ENCODE measurements at regions of chr6 and their contacts with region 1.

Region 1: DNA sequence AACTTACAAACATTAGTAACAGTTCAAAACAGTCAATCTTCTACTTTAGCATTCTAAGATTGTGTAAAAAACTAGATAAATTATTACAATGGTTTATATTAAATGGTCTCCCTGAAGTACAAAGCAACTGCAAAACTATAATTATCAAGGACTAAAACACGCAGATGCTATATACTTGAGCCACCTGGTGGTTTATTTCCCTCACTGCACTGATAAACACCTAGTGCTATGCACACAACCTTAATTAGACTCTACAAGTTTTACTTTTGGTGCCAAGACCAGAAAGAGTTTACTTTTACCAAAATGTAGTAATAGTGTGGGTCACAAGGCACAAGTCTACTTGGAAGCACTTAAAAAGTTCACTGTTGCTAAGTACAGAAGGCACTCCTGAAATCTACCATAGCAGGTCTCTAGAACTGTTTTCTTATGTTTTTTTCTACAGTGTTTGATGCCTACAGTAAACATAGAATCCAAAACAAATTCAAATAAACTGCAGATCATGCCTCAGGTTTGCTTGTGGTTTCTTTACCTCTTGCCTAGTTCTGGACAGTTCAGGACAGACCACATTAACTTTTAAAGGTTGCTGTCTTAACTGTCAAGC is 49.2 kb downstream of the GMDS start:
- DNase-seq: peak; percentile 72
- H3K4me3 Mint-ChIP-seq: no peak overlapping the region
- H3K27ac Mint-ChIP-seq: no peak overlapping the region
- H3K4me1 Mint-ChIP-seq: no peaks in the 10 kb centered on the region
- H3K27me3 Mint-ChIP-seq: no peaks in the 10 kb centered on the region
- CTCF ChIP-seq: peak; percentile 62

Region 2: DNA sequence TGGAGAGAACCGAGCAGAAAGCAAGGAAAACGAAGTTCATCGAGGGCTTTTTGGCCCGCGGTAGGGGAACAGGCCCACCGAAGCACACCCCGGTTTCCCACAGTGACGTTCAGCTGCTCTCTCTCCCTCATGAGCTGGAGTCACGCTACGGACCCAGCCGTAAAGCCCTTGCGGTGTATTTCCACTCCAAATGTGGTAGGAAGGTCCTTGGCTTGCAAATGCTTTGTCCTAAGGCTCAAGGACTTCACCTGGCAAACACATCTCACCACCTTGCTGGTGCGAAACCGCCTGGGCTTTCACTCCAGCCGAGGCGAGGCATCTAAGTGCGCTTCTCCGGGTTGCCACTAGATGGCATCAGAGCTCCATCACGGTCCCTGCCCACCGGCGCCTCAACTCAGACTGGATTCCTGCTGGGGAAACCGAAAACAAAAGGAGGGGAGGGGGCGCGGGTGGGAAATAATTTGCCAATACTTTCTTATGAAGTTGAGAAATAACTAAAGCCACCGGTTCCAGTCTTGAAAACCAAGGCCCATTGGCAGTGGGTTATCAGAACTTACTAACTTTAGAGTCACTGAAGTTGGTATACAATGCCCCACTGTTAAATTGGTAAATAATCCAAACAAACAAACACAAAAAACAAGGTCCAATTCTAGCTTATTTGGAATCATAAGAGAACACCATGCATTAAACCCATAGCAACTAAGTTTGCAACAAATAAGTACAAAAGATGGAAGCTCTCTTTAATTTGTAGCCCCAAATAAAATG is 599.9 kb before region 1 on chr6:
- CTCF ChIA-PET with region 1: interaction called, 10 read pairs
- POLR2A ChIA-PET with region 1: no interaction called
- intact Hi-C with region 1: loop called (anchors 1 kb)
- DNase-seq: peak; percentile 55
- H3K4me3 Mint-ChIP-seq: no peak overlapping the region
- H3K27ac Mint-ChIP-seq: no peak overlapping the region
- H3K4me1 Mint-ChIP-seq: peaks cover 28% of the 10 kb centered on the region
- H3K27me3 Mint-ChIP-seq: peaks cover 21% of the 10 kb centered on the region
- CTCF ChIP-seq: peak; percentile 93

Region 3: DNA sequence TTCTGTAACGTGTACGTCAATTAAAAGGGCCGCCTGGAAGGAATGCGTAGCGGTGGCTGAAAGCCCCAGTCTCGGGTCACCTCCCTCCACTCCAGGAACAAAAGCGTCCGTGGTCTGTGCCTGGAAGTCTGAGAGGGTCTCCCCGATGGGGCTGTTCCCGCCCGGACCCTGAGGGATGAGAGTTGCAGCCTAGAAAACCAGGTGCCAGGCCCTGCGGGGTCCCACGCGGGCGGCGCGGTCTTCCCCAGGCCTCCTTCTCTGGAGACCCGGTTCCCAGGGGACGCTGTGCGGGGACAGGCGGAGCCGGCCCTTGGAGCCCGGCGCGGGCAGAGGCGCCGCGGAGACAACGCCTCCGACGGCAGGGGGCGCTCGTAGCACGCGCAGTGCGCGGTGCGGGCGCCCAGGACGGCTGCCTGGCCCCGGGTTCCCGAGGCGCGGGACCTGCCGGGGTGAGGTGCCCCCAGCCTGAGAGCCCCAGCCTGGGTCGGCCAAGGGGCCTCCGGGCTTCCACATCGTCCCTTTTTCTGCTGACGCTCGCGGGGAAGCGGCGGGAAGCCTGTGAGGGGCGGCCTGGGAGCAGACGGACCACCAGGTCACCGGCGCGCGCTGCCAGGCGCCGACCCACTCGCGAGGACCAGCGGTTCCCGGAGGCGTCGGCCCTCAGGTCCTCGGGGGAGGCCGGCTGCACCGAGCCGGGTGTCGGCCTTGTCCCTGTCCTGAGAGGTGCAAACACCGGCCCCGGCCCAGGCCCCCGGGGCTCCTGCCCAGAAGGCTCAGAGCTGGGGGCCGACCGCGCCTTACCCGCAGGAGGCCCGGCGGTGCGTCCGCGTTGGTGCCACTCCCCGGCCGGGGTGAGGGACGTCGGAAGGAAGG is 591.8 kb before region 1 on chr6:
- CTCF ChIA-PET with region 1: interaction called, 4 read pairs
- POLR2A ChIA-PET with region 1: interaction called, 3 read pairs
- intact Hi-C with region 1: loop called (anchors 1 kb)
- DNase-seq: peak; percentile 66
- H3K4me3 Mint-ChIP-seq: peak overlapping the region; percentile 28
- H3K27ac Mint-ChIP-seq: no peak overlapping the region
- H3K4me1 Mint-ChIP-seq: no peaks in the 10 kb centered on the region
- H3K27me3 Mint-ChIP-seq: no peaks in the 10 kb centered on the region
- CTCF ChIP-seq: peak; percentile 97

Region 4: GRCh38 chr6:1686117-1687098 is 509.8 kb before region 1 on chr6:
- CTCF ChIA-PET with region 1: interaction called, 3 read pairs
- POLR2A ChIA-PET with region 1: no interaction called
- intact Hi-C with region 1: loop called (anchors 5 kb)
- DNase-seq: peak; percentile 96
- H3K4me3 Mint-ChIP-seq: peak overlapping the region; percentile 47
- H3K27ac Mint-ChIP-seq: peak overlapping the region; percentile 82
- H3K4me1 Mint-ChIP-seq: peaks cover 46% of the 10 kb centered on the region
- H3K27me3 Mint-ChIP-seq: no peaks in the 10 kb centered on the region
- CTCF ChIP-seq: peak; percentile 25

Region 5: GRCh38 chr6:1856381-1856780 is 339.8 kb before region 1 on chr6:
- CTCF ChIA-PET with region 1: interaction called, 7 read pairs
- POLR2A ChIA-PET with region 1: no interaction called
- intact Hi-C with region 1: loop called (anchors 2 kb)
- DNase-seq: peak; percentile 73
- H3K4me3 Mint-ChIP-seq: no peak overlapping the region
- H3K27ac Mint-ChIP-seq: no peak overlapping the region
- H3K4me1 Mint-ChIP-seq: peaks cover 6% of the 10 kb centered on the region
- H3K27me3 Mint-ChIP-seq: no peaks in the 10 kb centered on the region
- CTCF ChIP-seq: no peak

Region 6: DNA sequence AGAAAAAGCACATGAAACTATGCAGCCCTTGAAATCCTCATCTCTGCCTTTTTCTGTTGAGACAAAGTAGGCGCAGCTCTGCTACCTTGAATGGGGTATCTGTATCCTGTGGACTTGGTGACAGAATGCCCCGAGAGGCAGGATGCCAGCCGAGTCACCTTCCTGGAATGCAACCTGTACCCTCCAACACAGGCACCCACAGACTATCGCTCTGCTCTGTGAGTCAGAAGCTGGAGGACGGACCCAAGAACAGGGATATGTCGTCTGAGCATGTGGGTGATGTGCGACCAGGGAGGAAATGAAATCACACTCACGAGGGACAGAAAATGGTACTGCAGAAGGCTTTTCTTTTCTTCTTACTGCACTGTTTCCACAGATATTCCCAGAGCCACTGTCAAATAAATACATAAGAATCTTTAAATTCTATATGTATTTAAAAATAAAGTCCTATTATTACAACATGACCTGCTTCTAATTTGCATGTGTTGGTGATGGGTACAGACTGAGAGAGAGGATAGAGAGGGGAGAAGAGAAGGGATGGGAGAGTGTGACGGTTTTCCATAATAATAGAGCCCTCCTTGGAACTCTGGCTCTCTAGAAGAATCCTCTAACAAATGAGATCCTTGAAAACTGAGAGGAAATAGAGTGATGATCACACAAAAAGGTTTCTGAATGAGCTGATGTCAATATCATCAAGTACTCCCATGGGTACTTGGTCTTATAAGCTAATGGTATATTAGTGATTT is 278.4 kb before region 1 on chr6:
- CTCF ChIA-PET with region 1: no interaction called
- POLR2A ChIA-PET with region 1: no interaction called
- intact Hi-C with region 1: no loop called
- DNase-seq: peak; percentile 75
- H3K4me3 Mint-ChIP-seq: no peak overlapping the region
- H3K27ac Mint-ChIP-seq: peak overlapping the region; percentile 50
- H3K4me1 Mint-ChIP-seq: peaks cover 14% of the 10 kb centered on the region
- H3K27me3 Mint-ChIP-seq: no peaks in the 10 kb centered on the region
- CTCF ChIP-seq: no peak

Region 7: DNA sequence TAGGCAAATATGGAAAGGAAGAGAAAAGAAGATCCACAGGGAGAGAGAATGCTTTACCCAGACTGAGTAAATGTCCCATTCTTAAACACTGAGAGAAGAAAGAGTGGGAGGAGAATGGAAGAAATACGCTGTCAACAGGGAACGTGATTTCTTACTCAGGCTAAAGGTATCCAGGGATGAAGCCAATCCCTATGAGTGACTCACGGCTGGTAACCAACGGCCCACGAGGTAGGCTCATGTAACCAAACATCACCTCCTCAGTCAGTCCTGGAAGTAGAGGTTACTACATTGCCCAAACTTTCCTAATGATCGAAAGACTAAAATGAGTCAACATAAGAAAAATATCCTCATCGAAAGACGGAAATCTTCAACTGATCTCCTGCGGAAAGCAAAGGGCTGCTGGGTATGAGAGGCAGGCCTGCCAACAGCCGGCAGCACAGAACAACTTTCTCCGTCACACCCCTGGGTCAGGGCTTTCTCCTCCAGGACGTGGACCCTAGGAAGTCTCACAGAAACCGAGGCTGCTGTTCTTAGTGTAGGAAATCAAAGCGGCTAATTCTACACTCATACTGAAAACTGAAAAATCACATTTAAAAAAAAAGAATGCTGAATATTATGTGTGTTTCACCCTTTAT is 243.3 kb before region 1 on chr6:
- CTCF ChIA-PET with region 1: no interaction called
- POLR2A ChIA-PET with region 1: no interaction called
- intact Hi-C with region 1: loop called (anchors 5 kb)
- DNase-seq: peak; percentile 98
- H3K4me3 Mint-ChIP-seq: peak overlapping the region; percentile 68
- H3K27ac Mint-ChIP-seq: peak overlapping the region; percentile 100
- H3K4me1 Mint-ChIP-seq: peaks cover 18% of the 10 kb centered on the region
- H3K27me3 Mint-ChIP-seq: no peaks in the 10 kb centered on the region
- CTCF ChIP-seq: no peak

Region 8: DNA sequence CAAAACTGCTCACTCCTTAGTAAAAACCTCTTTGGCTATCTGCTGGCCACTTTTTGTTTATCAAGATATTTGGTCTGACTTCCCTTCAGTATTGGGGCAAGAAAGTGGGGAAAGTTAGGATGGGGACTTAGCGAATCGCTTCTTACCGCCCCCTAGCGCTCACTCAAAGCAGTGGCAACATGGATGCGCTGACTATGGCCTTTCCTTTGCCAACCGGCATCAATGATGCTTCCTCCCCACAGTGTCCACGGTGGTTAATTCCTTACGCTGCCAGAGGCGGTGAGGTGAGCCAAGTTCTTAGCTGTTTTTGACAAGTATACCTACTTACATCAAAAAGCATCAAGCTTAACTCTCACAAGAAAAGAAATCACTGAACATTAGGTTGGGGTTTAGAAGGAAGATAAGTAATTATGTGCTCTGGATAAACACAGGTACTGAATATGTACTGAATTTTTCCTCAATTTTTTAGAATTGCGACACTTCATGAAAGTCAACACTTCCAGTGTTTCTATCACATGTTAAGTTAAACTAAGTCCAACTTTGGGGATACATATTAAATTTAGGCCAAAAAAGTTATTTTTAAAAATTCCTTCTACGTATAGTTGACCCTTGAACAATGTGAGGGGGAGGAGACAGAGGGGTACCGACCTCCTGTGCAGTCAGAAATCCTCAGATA is 37.4 kb before region 1 on chr6:
- CTCF ChIA-PET with region 1: no interaction called
- POLR2A ChIA-PET with region 1: no interaction called
- intact Hi-C with region 1: no loop called
- DNase-seq: no peak
- H3K4me3 Mint-ChIP-seq: no peak overlapping the region
- H3K27ac Mint-ChIP-seq: peak overlapping the region; percentile 86
- H3K4me1 Mint-ChIP-seq: peaks cover 32% of the 10 kb centered on the region
- H3K27me3 Mint-ChIP-seq: no peaks in the 10 kb centered on the region
- CTCF ChIP-seq: no peak

Region 9: DNA sequence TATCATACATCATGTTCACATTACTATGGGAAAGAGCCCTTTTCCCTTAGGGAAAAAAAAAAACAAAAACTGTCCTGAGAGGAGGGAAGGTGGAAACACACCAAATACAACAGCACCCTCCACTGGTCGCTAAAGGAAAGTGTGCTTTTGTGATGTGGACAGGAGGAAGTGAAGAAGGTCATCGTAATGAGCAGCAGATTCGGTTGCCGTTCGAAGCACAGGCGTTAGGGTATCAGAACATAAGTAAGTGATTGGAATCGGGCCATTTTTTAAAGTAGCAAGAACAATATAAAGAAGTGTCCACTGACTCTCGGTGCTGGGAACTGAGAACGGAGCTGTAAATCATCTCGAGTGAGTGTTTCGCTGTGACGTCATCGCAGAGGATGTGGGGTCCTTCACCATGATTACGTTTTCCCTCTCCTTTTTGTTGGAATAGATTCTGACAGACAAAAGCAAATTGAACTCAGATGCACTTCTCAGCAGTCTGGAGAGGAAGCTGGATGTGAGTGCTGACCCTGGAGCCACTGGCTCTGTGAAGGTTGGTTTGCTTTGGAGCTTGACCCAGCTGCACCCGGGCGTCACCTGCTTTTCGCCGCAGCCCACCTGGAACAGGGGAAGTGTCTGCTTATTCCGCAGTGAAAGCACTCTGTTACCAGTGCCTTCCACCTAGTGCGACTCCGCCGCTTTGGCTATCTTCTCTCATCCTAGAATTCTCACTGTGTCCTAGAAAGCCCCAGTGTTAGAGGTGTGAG is 252.8 kb after region 1 on chr6:
- CTCF ChIA-PET with region 1: no interaction called
- POLR2A ChIA-PET with region 1: no interaction called
- intact Hi-C with region 1: loop called (anchors 5 kb)
- DNase-seq: peak; percentile 82
- H3K4me3 Mint-ChIP-seq: no peak overlapping the region
- H3K27ac Mint-ChIP-seq: no peak overlapping the region
- H3K4me1 Mint-ChIP-seq: peaks cover 6% of the 10 kb centered on the region
- H3K27me3 Mint-ChIP-seq: no peaks in the 10 kb centered on the region
- CTCF ChIP-seq: peak; percentile 67

Region 10: GRCh38 chr6:2497922-2498623 is 301.9 kb after region 1 on chr6:
- CTCF ChIA-PET with region 1: no interaction called
- POLR2A ChIA-PET with region 1: no interaction called
- intact Hi-C with region 1: no loop called
- DNase-seq: peak; percentile 84
- H3K4me3 Mint-ChIP-seq: no peak overlapping the region
- H3K27ac Mint-ChIP-seq: no peak overlapping the region
- H3K4me1 Mint-ChIP-seq: peaks cover 7% of the 10 kb centered on the region
- H3K27me3 Mint-ChIP-seq: no peaks in the 10 kb centered on the region
- CTCF ChIP-seq: no peak

Measured in MCF 10A (cell line).